IMR-90 (cell line): ENCODE measurements at regions of chr13 and their contacts with region 1.

Region 1: DNA sequence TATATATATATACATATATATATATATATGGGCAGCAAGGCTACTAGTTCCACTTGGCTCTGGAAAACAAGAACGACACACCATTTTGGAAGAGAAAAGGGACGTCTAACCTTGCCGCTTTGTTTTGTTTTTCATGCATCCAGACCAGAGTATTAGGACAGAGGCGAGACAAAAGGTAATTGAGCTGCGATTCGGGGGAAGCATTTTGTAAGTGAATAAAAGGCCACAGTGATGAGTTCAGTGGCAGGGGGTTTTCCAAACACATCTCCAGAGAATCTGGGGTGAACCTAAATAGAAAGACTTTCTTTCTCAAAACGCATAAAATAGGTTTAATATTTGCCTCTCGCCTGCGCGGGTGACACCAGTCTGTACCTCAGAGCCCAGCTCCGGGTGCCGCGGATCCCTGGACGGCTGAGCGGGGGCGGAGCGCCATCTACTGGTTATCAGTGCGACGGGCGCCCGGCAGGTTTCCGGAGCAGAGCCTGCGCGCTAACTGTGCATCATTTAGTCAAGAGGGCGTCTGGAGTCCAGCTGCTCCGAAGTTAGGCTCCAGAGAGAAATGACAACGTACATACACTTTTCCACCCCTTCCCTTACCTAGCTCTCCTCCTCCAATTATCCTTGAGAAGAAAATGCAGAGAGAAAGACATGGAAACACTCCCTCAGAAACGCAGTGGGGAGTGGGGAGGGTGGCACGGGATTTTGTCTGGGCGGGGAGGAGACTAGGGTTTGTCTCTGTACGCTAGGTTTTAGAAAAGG is 262.3 kb downstream of the TBC1D4 start:
- DNase-seq: peak; percentile 57
- ATAC-seq: peak; percentile 99
- H3K4me3 ChIP-seq: peak overlapping the region; percentile 24
- H3K27ac ChIP-seq: no peak overlapping the region
- H3K4me1 ChIP-seq: no peaks in the 10 kb centered on the region
- H3K27me3 ChIP-seq: peaks cover 19% of the 10 kb centered on the region
- CTCF ChIP-seq: peak; percentile 98
- POLR2A ChIP-seq: peak; percentile 52; the same call in 1 of the 2 replicates
- RAD21 ChIP-seq: peak; percentile 97

Region 2: GRCh38 chr13:73754727-73755292 is 1464.8 kb before region 1 on chr13:
- CTCF ChIA-PET with region 1: no interaction called
- POLR2A ChIA-PET with region 1: no interaction called
- dilution Hi-C with region 1: no loop called
- in situ Hi-C with region 1: loop called (anchors 25 kb)
- intact Hi-C with region 1: loop called (anchors 10 kb)
- DNase-seq: peak; percentile 70
- ATAC-seq: peak; percentile 79
- H3K4me3 ChIP-seq: no peak overlapping the region
- H3K27ac ChIP-seq: no peak overlapping the region
- H3K4me1 ChIP-seq: no peaks in the 10 kb centered on the region
- H3K27me3 ChIP-seq: no peaks in the 10 kb centered on the region
- CTCF ChIP-seq: peak; percentile 75
- POLR2A ChIP-seq: no peak
- RAD21 ChIP-seq: peak; percentile 81

Region 3: GRCh38 chr13:73835138-73835721 is 1384.4 kb before region 1 on chr13:
- CTCF ChIA-PET with region 1: no interaction called
- POLR2A ChIA-PET with region 1: no interaction called
- dilution Hi-C with region 1: no loop called
- in situ Hi-C with region 1: no loop called
- intact Hi-C with region 1: loop called (anchors 2 kb)
- DNase-seq: peak; percentile 56
- ATAC-seq: peak; percentile 79; the same call in 1 of the 2 replicates
- H3K4me3 ChIP-seq: no peak overlapping the region
- H3K27ac ChIP-seq: no peak overlapping the region
- H3K4me1 ChIP-seq: peaks cover 6% of the 10 kb centered on the region
- H3K27me3 ChIP-seq: no peaks in the 10 kb centered on the region
- CTCF ChIP-seq: peak; percentile 63
- POLR2A ChIP-seq: no peak
- RAD21 ChIP-seq: peak; percentile 70

Region 4: GRCh38 chr13:74210693-74211393 is 1008.8 kb before region 1 on chr13:
- CTCF ChIA-PET with region 1: no interaction called
- POLR2A ChIA-PET with region 1: no interaction called
- dilution Hi-C with region 1: no loop called
- in situ Hi-C with region 1: no loop called
- intact Hi-C with region 1: loop called (anchors 10 kb)
- DNase-seq: peak; percentile 98
- ATAC-seq: peak; percentile 92
- H3K4me3 ChIP-seq: peak overlapping the region; percentile 4; the same call in 1 of the 2 replicates
- H3K27ac ChIP-seq: peak overlapping the region; percentile 79
- H3K4me1 ChIP-seq: peaks cover 14% of the 10 kb centered on the region
- H3K27me3 ChIP-seq: no peaks in the 10 kb centered on the region
- CTCF ChIP-seq: no peak
- POLR2A ChIP-seq: no peak
- RAD21 ChIP-seq: peak; percentile 9; the same call in 1 of the 2 replicates

Region 5: DNA sequence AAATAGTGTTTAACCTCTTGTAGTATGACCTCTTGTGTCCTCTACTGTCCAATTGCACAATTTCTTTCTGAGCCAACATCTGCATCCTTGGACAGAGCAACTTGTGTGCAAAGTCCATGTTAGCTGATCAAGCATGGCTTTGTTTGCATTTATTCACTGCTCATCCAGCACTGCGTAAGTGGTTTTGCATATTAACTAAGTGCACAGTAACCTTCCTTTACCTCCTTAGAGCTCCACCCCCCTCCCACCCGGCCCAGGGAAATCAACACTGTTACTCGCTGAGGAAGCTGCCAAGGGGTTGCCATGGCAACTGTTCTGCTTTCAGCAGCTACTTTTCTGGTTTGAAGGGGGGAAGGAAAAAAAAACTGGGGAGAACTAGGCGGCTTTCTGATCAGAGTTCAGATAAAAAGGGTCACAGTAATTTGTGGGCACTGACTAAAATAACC is 931.9 kb before region 1 on chr13:
- CTCF ChIA-PET with region 1: interaction called, 5 read pairs
- POLR2A ChIA-PET with region 1: no interaction called
- dilution Hi-C with region 1: no loop called
- in situ Hi-C with region 1: no loop called
- intact Hi-C with region 1: loop called (anchors 5 kb)
- DNase-seq: peak; percentile 64
- ATAC-seq: peak; percentile 71
- H3K4me3 ChIP-seq: no peak overlapping the region
- H3K27ac ChIP-seq: no peak overlapping the region
- H3K4me1 ChIP-seq: peaks cover 2% of the 10 kb centered on the region
- H3K27me3 ChIP-seq: no peaks in the 10 kb centered on the region
- CTCF ChIP-seq: no peak
- POLR2A ChIP-seq: no peak
- RAD21 ChIP-seq: no peak

Region 6: GRCh38 chr13:74907788-74908187 is 311.9 kb before region 1 on chr13:
- CTCF ChIA-PET with region 1: no interaction called
- POLR2A ChIA-PET with region 1: no interaction called
- dilution Hi-C with region 1: no loop called
- in situ Hi-C with region 1: no loop called
- intact Hi-C with region 1: loop called (anchors 10 kb)
- DNase-seq: no peak
- ATAC-seq: no peak
- H3K4me3 ChIP-seq: no peak overlapping the region
- H3K27ac ChIP-seq: no peak overlapping the region
- H3K4me1 ChIP-seq: no peaks in the 10 kb centered on the region
- H3K27me3 ChIP-seq: no peaks in the 10 kb centered on the region
- CTCF ChIP-seq: no peak
- POLR2A ChIP-seq: no peak
- RAD21 ChIP-seq: no peak